ENCODE measurements at regions of chr6 and their contacts with region 1.

Region 1: DNA sequence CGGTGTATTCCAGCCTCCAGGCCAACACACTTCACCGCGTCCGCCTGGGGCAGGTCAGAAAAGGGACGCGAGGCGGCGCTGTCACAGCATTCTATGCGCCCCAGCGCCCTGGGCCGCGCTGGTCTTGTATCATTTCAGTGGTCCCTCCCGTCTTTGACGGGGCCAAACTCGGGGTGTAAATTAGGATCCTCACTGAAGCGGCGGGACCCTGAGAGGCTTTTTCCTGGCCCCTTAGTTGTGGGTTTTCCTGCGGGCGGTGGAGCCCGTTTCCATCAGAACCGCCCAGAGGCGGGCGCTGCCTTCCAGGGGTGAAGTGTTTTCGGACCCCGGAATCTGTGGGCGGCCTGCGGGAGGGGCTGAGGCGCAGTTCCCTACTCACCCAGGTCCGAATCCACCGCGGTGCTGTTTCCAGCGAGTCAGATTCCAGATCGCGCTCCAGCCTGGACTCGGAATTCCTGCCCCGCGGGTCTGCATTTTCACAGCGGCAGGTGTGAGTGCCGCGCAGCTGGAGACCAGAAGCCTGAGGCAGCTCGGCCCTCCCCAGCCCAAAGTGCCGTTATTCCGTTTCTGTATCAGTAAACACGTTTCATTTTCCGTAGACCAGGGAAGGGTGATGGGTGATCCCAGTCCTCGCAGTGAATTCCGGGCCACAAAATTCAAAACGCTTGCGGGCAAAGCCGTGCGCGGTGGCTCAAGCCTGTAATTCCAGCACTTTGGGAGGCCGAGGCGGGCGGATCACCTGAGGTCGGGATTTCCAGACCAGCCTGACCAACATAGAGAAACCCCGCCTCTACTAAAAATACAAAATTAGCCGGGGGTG is 3.9 kb upstream of the MICB start:
- H3K4me3 ChIP-seq: peak overlapping the region; percentile 60
- H3K27ac ChIP-seq: peak overlapping the region; percentile 64
- H3K4me1 ChIP-seq: no peaks in the 10 kb centered on the region
- CTCF ChIP-seq: peak; percentile 98

Region 2: GRCh38 chr6:31513456-31514165 is 19.5 kb after region 1 on chr6:
- CTCF ChIA-PET with region 1: interaction called, 10 read pairs
- POLR2A ChIA-PET with region 1: interaction called, 3 read pairs
- H3K4me3 ChIP-seq: no peak overlapping the region
- H3K27ac ChIP-seq: no peak overlapping the region
- H3K4me1 ChIP-seq: no peaks in the 10 kb centered on the region
- CTCF ChIP-seq: no peak

Region 3: GRCh38 chr6:31525932-31526591 is 32.0 kb after region 1 on chr6:
- CTCF ChIA-PET with region 1: interaction called, 26 read pairs
- POLR2A ChIA-PET with region 1: interaction called, 24 read pairs
- H3K4me3 ChIP-seq: no peak overlapping the region
- H3K27ac ChIP-seq: no peak overlapping the region
- H3K4me1 ChIP-seq: peaks cover 3% of the 10 kb centered on the region
- CTCF ChIP-seq: no peak

Region 4: GRCh38 chr6:31546962-31547726 is 53.1 kb after region 1 on chr6 and contains the start of gene NFKBIL1:
- CTCF ChIA-PET with region 1: interaction called, 40 read pairs
- POLR2A ChIA-PET with region 1: interaction called, 97 read pairs
- H3K4me3 ChIP-seq: peak within 1 kb of the TSS; percentile 47
- H3K27ac ChIP-seq: peak within 1 kb of the TSS; percentile 50
- H3K4me1 ChIP-seq: peaks cover 2% of the 10 kb centered on the region; the same call in 1 of the 2 replicates
- CTCF ChIP-seq: no peak; the same call in 1 of the 2 replicates

Measured in HEK293 (cell line).